ENCODE measurements at regions of chr12 and their contacts with region 1.

Region 1: DNA sequence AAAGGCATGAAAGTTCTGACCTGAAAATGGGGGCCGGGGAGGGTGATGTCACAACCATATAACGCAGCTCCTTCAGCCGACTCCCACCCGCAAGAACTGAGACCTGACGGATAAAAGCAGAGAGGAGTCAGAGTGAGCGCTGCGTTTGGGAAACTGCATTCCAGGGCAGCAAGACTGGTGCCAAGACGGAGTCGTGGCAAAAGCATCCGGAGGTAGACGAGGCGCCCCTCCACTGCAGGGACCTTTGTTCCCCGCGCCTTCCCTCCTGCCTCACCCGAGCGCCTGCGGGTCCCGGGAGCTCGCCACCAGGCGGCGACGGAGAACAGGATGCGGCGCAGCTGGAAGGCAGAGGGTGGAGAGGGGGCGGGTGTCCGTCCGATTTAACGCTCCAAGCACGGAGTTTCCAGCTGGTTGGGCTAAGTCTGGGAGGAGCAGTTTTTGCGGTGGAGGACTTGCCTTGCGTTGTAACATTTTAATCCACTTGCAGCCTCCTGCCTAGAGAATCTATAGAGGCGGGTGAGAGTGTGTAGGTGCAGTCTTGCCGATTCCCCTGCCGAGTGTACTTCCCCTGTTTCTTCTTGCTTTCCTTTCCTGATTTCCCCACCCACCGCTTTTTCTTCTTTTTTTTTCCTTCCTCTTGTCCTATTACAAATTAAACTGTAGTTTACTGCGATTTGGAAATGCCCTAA is 1.2 kb upstream of the CPNE8 start:
- DNase-seq: peak; percentile 67 to 87
- H3K4me3 ChIP-seq: peak overlapping the region; percentile 80
- H3K27ac ChIP-seq: peak overlapping the region; percentile 95; the same call in 1 of the 2 replicates
- H3K4me1 ChIP-seq: peaks cover 23% of the 10 kb centered on the region
- H3K27me3 ChIP-seq: no peaks in the 10 kb centered on the region
- CTCF ChIP-seq: peak; percentile 80

Region 2: GRCh38 chr12:38053655-38054464 is 852.8 kb before region 1 on chr12:
- CTCF ChIA-PET with region 1: no interaction called
- POLR2A ChIA-PET with region 1: no interaction called
- intact Hi-C with region 1: loop called (anchors 10 kb)
- DNase-seq: peak; percentile 70 to 82
- H3K4me3 ChIP-seq: peak overlapping the region; percentile 41; the same call in 1 of the 2 replicates
- H3K27ac ChIP-seq: no peak overlapping the region
- H3K4me1 ChIP-seq: peaks cover 17% of the 10 kb centered on the region
- H3K27me3 ChIP-seq: no peaks in the 10 kb centered on the region
- CTCF ChIP-seq: peak; percentile 88

Region 3: GRCh38 chr12:38316391-38317129 is 590.1 kb before region 1 on chr12 and contains the start of gene ALG10B:
- CTCF ChIA-PET with region 1: no interaction called
- POLR2A ChIA-PET with region 1: interaction called, 6 read pairs
- intact Hi-C with region 1: loop called (anchors 5 kb)
- DNase-seq: peak; percentile 88 to 91
- H3K4me3 ChIP-seq: peak within 1 kb of the TSS; percentile 60
- H3K27ac ChIP-seq: peak within 1 kb of the TSS; percentile 37
- H3K4me1 ChIP-seq: peaks cover 7% of the 10 kb centered on the region; the same call in 1 of the 2 replicates
- H3K27me3 ChIP-seq: no peaks in the 10 kb centered on the region
- CTCF ChIP-seq: peak; percentile 82
- total RNA-seq, gene ALG10B: 13.1 and 14.4 TPM in 2 replicates

Region 4: DNA sequence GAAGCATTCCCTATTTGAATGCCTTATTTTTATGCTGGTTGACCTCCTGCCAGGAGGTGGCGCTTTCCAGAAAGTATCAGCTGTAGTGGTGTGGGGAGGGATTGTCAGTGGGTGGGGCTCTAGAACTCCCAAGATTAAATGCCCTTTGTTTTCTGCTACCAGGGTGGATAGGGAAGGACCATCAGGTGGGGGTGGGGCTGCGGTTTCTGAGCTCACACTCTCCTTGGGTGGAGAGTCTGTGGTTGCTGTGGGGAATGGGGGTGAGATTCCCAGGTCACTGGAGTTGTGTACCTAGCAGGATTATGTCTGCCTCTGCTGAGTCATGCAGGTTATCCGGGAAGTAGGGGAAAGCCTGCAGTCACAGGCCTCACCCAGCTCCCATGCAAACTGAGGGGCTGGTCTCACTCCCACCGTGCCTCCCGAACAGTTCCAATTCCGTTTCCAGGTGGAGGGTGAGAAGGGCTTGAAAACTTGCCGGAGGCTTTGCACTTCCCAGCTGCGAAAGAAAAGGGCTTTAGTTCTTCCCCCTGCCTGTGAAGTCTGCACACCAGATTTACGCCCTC is 521.7 kb before region 1 on chr12:
- CTCF ChIA-PET with region 1: interaction called, 11 read pairs
- POLR2A ChIA-PET with region 1: interaction called, 18 read pairs
- intact Hi-C with region 1: loop called (anchors 1 kb)
- DNase-seq: peak; percentile 91 to 97
- H3K4me3 ChIP-seq: peak overlapping the region; percentile 44; the same call in 1 of the 2 replicates
- H3K27ac ChIP-seq: peak overlapping the region; percentile 98
- H3K4me1 ChIP-seq: peaks cover 37% of the 10 kb centered on the region
- H3K27me3 ChIP-seq: no peaks in the 10 kb centered on the region
- CTCF ChIP-seq: peak; percentile 87

Region 5: GRCh38 chr12:38544330-38545066 is 362.1 kb before region 1 on chr12:
- CTCF ChIA-PET with region 1: interaction called, 8 read pairs
- POLR2A ChIA-PET with region 1: no interaction called
- intact Hi-C with region 1: loop called (anchors 10 kb)
- DNase-seq: no peak
- H3K4me3 ChIP-seq: no peak overlapping the region
- H3K27ac ChIP-seq: no peak overlapping the region
- H3K4me1 ChIP-seq: peaks cover 37% of the 10 kb centered on the region
- H3K27me3 ChIP-seq: no peaks in the 10 kb centered on the region
- CTCF ChIP-seq: no peak

Region 6: GRCh38 chr12:38850476-38850875 is 56.1 kb before region 1 on chr12:
- CTCF ChIA-PET with region 1: no interaction called
- POLR2A ChIA-PET with region 1: interaction called, 10 read pairs
- intact Hi-C with region 1: no loop called
- DNase-seq: no peak
- H3K4me3 ChIP-seq: no peak overlapping the region
- H3K27ac ChIP-seq: no peak overlapping the region
- H3K4me1 ChIP-seq: no peaks in the 10 kb centered on the region
- H3K27me3 ChIP-seq: no peaks in the 10 kb centered on the region
- CTCF ChIP-seq: no peak

Region 7: GRCh38 chr12:39103552-39104165 is 197.0 kb after region 1 on chr12:
- CTCF ChIA-PET with region 1: interaction called, 9 read pairs
- POLR2A ChIA-PET with region 1: no interaction called
- intact Hi-C with region 1: loop called (anchors 2 kb)
- DNase-seq: peak; percentile 18 to 52
- H3K4me3 ChIP-seq: no peak overlapping the region
- H3K27ac ChIP-seq: no peak overlapping the region
- H3K4me1 ChIP-seq: 0 out of 2 replicates have a peak, but pooled peaks cover 4% of the 10 kb centered on the region
- H3K27me3 ChIP-seq: no peaks in the 10 kb centered on the region
- CTCF ChIP-seq: peak; percentile 86

Measured in PC-9 (cell line).